ENCODE measurements at regions of chr13 and their contacts with region 1.

Region 1: GRCh38 chr13:41132512-41133152 is at the start of gene KBTBD6:
- DNase-seq: peak; percentile 92
- H3K4me3 Mint-ChIP-seq: peak within 1 kb of the TSS; percentile 92
- H3K27ac Mint-ChIP-seq: peak within 1 kb of the TSS; percentile 93
- H3K4me1 Mint-ChIP-seq: peaks cover 45% of the 10 kb centered on the region
- H3K27me3 Mint-ChIP-seq: peaks cover 3% of the 10 kb centered on the region
- total RNA-seq, gene KBTBD6: 6.6 and 6.8 TPM in 2 replicates

Region 2: DNA sequence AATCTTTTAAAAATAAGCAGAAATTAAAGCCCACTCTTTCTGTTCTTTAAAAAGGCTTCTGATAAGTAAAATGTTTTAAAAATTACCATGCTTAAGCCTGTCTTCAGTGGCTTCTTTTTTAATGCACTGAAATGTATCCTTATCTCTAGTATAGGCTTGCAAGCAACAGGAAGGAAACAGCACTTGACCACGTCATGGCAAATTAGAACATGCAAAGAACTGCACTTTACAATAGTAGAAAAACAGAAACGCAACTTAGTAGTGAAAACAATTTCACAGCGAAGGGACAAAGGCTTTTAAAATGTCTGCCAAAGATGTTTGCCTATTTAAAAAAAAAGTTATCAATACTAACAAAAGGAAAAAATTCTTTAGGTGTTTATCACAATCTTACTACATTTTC is 149.9 kb before region 1 on chr13:
- intact Hi-C with region 1: loop called (anchors 1 kb)
- DNase-seq: peak; percentile 62
- H3K4me3 Mint-ChIP-seq: peak overlapping the region; percentile 91
- H3K27ac Mint-ChIP-seq: peak overlapping the region; percentile 90
- H3K4me1 Mint-ChIP-seq: peaks cover 79% of the 10 kb centered on the region
- H3K27me3 Mint-ChIP-seq: no peaks in the 10 kb centered on the region

Region 3: DNA sequence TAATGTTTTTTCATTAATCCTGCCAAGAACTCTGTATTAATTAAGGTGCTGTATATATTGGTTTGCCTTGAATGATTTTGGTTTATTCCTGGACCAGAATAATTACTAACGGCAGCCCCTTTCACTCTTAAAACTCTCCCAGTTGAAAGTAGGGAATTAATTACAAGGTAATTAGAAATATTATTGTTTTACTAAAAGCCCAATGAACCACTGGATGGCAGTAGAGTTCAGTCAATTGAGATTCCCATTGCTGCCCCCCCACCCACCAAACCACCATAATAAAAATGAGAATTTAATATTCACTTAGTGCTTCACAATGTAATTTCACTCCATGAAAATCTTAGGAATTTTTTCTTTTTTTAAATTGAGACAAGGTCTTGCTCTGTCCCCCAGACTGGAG is 57.6 kb before region 1 on chr13:
- intact Hi-C with region 1: loop called (anchors 5 kb)
- DNase-seq: no peak
- H3K4me3 Mint-ChIP-seq: no peak overlapping the region
- H3K27ac Mint-ChIP-seq: no peak overlapping the region
- H3K4me1 Mint-ChIP-seq: no peaks in the 10 kb centered on the region
- H3K27me3 Mint-ChIP-seq: no peaks in the 10 kb centered on the region

Region 4: GRCh38 chr13:41222259-41222852 is 89.7 kb after region 1 on chr13:
- intact Hi-C with region 1: loop called (anchors 1 kb)
- DNase-seq: peak; percentile 40
- H3K4me3 Mint-ChIP-seq: no peak overlapping the region
- H3K27ac Mint-ChIP-seq: no peak overlapping the region
- H3K4me1 Mint-ChIP-seq: no peaks in the 10 kb centered on the region
- H3K27me3 Mint-ChIP-seq: no peaks in the 10 kb centered on the region

Region 5: DNA sequence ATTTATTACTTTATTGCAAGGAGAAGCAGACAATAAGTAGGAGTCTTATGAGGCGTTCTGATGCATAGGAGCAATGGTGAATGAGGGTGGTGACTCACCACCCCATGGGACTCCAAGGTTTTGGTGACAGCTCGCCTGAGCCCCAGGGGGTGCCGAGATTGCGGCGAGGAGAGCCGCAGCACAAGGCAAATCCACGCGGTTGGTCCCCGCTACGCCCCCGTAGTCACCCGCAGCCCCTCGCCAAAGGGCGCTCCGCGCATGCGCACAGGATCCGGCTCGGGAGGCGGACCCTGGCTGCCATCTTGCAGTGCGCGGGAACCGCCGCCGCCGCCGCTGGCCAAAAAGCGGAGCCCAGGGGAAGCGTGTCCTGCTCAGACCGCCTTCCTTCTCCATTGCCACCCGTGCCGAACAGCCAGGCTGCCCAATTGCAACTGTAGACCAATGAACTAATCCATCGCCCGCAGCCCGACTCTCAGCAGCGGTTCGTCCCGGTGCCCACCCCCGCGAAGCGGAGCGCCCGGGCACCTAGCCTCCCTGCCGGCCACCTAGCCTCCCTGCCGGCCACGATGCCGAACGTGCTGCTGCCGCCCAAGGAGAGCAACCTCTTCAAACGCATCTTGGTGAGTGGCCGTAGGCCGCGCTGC is 178.5 kb after region 1 on chr13 and contains the start of gene NAA16:
- intact Hi-C with region 1: loop called (anchors 1 kb)
- DNase-seq: peak; percentile 92
- H3K4me3 Mint-ChIP-seq: peak within 1 kb of the TSS; percentile 94
- H3K27ac Mint-ChIP-seq: peak within 1 kb of the TSS; percentile 83
- H3K4me1 Mint-ChIP-seq: peaks cover 38% of the 10 kb centered on the region
- H3K27me3 Mint-ChIP-seq: peaks cover 2% of the 10 kb centered on the region
- total RNA-seq, gene NAA16: 31.9 and 33.4 TPM in 2 replicates